Ovary (tissue), 10 donors: ENCODE measurements at regions of chr14 and their contacts with region 1.

Region 1: DNA sequence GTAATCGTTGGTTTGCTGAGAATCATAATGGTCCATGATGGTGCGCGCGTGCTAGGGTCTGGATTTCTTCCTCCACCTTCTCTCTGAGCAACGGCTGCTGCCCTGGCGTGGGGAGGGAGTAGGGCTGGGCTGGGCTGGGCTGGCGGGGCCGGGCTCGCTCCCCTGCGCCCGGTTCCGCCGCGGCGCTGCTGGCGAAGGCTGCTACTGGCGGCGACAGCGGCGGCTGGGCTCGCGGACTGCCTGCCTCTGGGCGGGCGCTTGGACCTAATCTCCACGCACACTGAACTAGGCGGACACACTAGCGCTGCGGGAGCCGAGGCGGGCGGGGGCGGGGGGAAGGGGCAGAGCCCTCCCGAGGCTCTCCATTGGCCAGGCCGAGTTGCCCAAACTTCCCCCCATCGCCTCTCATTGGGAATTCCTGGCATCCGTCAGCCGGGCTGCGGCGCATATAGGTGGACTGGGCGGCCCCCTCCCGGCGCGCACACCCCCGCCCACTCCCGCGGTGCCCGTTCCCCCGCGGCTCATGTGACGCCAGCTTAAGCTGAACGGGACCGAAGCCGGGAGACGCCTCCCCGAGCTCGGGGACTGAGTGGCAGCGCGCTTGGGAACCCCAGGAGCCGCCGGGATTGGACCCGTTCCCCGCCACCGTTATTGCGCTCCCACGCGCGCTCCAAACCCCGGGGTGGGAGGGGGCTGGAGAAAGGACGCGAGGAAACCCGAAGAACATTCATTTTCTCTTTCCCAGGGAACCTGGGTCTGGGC is at the start of gene ACTN1:
- DNase-seq: peak; percentile 91 to 96 (median 95)
- H3K4me3 ChIP-seq: peak within 1 kb of the TSS; percentile 80
- H3K27ac ChIP-seq: peak within 1 kb of the TSS; percentile 96 to 97
- H3K4me1 ChIP-seq: peaks cover 24% of the 10 kb centered on the region
- H3K27me3 ChIP-seq: no peaks in the 10 kb centered on the region
- CTCF ChIP-seq: no peak
- EP300 ChIP-seq: peak; percentile 49
- POLR2A ChIP-seq: peak; percentile 65
- total RNA-seq, gene ACTN1: 39.0 to 203 (median 138) TPM

Region 2: GRCh38 chr14:68911594-68912227 is 67.5 kb before region 1 on chr14:
- intact Hi-C with region 1: loop called in 2 of 4 experiments (anchors 10 kb)
- DNase-seq: peak; percentile 67 to 84 (median 79)
- H3K4me3 ChIP-seq: no peak overlapping the region
- H3K27ac ChIP-seq: no peak overlapping the region
- H3K4me1 ChIP-seq: no peaks in the 10 kb centered on the region
- H3K27me3 ChIP-seq: no peaks in the 10 kb centered on the region
- CTCF ChIP-seq: peak; percentile 88 to 98 (median 92)
- EP300 ChIP-seq: no peak
- POLR2A ChIP-seq: peak; percentile 15

Region 3: GRCh38 chr14:68926236-68926635 is 53.0 kb before region 1 on chr14:
- intact Hi-C with region 1: loop called in 1 of 4 experiments (anchors 10 kb)
- DNase-seq: no peak
- H3K4me3 ChIP-seq: no peak overlapping the region
- H3K27ac ChIP-seq: no peak overlapping the region
- H3K4me1 ChIP-seq: peaks cover 9% of the 10 kb centered on the region
- H3K27me3 ChIP-seq: no peaks in the 10 kb centered on the region
- CTCF ChIP-seq: no peak
- EP300 ChIP-seq: no peak
- POLR2A ChIP-seq: no peak

Region 4: GRCh38 chr14:68939893-68940613 is 39.1 kb before region 1 on chr14:
- intact Hi-C with region 1: loop called in 1 of 4 experiments (anchors 5 kb)
- DNase-seq: peak in 4 of 5 donors; percentile 33 to 66 (median 56)
- H3K4me3 ChIP-seq: no peak overlapping the region
- H3K27ac ChIP-seq: peak overlapping the region in 1 of 2 donors; percentile 18
- H3K4me1 ChIP-seq: peaks cover 36% of the 10 kb centered on the region
- H3K27me3 ChIP-seq: no peaks in the 10 kb centered on the region
- CTCF ChIP-seq: no peak
- EP300 ChIP-seq: no peak
- POLR2A ChIP-seq: no peak

Region 5: GRCh38 chr14:68952531-68953195 is 26.5 kb before region 1 on chr14:
- intact Hi-C with region 1: loop called in 1 of 4 experiments (anchors 2 kb)
- DNase-seq: peak; percentile 42 to 63 (median 60)
- H3K4me3 ChIP-seq: peak overlapping the region; percentile 19
- H3K27ac ChIP-seq: peak overlapping the region; percentile 47 to 63
- H3K4me1 ChIP-seq: peaks cover 45% of the 10 kb centered on the region
- H3K27me3 ChIP-seq: no peaks in the 10 kb centered on the region
- CTCF ChIP-seq: no peak
- EP300 ChIP-seq: no peak
- POLR2A ChIP-seq: no peak

Region 6: GRCh38 chr14:69043596-69044260 is 64.5 kb after region 1 on chr14:
- intact Hi-C with region 1: loop called (anchors 5 to 10 kb)
- DNase-seq: peak in 4 of 5 donors; percentile 41 to 66 (median 60)
- H3K4me3 ChIP-seq: no peak overlapping the region
- H3K27ac ChIP-seq: peak overlapping the region; percentile 47 to 63
- H3K4me1 ChIP-seq: peaks cover 37% of the 10 kb centered on the region
- H3K27me3 ChIP-seq: no peaks in the 10 kb centered on the region
- CTCF ChIP-seq: no peak
- EP300 ChIP-seq: no peak
- POLR2A ChIP-seq: no peak

Region 7: DNA sequence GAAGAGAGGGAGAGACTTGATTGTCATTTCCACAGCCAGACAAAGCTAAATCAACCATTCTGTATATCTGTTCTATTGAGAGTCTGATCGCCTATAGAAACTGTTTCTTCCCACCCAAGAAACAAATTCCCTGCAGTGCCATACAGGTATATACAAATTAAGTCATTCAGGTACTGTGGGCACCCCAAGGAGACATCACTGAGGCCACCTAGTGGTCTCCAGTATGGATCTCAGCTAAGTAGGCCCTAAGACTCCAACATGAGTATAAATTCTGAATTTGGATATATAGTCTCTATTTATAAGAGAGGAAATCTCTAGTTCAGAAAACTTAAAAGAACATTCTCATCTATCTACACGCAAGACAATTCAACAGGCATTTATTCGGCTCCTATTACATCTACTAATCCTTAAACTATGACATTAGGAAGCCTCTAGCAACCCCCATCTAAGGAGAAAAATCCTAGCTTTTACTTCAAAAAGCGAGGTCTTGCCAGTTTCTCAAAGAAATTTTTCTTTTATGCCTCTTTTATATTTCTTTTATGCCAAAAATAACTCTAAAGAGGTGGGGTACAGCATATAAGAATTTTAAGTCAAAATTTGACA is 111.1 kb after region 1 on chr14:
- intact Hi-C with region 1: loop called in 2 of 4 experiments (anchors 10 kb)
- DNase-seq: no peak
- H3K4me3 ChIP-seq: no peak overlapping the region
- H3K27ac ChIP-seq: no peak overlapping the region
- H3K4me1 ChIP-seq: no peaks in the 10 kb centered on the region
- H3K27me3 ChIP-seq: no peaks in the 10 kb centered on the region
- CTCF ChIP-seq: peak in 2 of 3 donors; percentile 23 to 39
- EP300 ChIP-seq: no peak
- POLR2A ChIP-seq: no peak

Region 8: GRCh38 chr14:69354383-69355153 is 375.4 kb after region 1 on chr14:
- intact Hi-C with region 1: no loop called
- DNase-seq: no peak
- H3K4me3 ChIP-seq: no peak overlapping the region
- H3K27ac ChIP-seq: no peak overlapping the region
- H3K4me1 ChIP-seq: no peaks in the 10 kb centered on the region
- H3K27me3 ChIP-seq: no peaks in the 10 kb centered on the region
- CTCF ChIP-seq: no peak
- EP300 ChIP-seq: no peak
- POLR2A ChIP-seq: no peak